CD4-positive, alpha-beta memory T cell (primary cell): ENCODE measurements at regions of chr1 and their contacts with region 1.

Region 1: GRCh38 chr1:117758444-117759316 is 152.8 kb downstream of the TENT5C start:
- DNase-seq: peak; percentile 57 to 65 (median 63)
- H3K4me3 ChIP-seq: peak overlapping the region; percentile 3 to 42
- H3K4me3 Mint-ChIP-seq: peak overlapping the region; percentile 74 to 94 (median 87)
- H3K27ac ChIP-seq: no peak overlapping the region
- H3K27ac Mint-ChIP-seq: peak overlapping the region in 5 of 7 donors; percentile 5 to 85 (median 45)
- H3K4me1 ChIP-seq: peaks cover 8% of the 10 kb centered on the region
- H3K4me1 Mint-ChIP-seq: peaks cover 4 to 10% (median 7%) of the 10 kb centered on the region in 4 donors
- H3K27me3 ChIP-seq: peaks cover 5% of the 10 kb centered on the region
- H3K27me3 Mint-ChIP-seq: peaks cover 8 to 10% of the 10 kb centered on the region in 2 donors

Region 2: DNA sequence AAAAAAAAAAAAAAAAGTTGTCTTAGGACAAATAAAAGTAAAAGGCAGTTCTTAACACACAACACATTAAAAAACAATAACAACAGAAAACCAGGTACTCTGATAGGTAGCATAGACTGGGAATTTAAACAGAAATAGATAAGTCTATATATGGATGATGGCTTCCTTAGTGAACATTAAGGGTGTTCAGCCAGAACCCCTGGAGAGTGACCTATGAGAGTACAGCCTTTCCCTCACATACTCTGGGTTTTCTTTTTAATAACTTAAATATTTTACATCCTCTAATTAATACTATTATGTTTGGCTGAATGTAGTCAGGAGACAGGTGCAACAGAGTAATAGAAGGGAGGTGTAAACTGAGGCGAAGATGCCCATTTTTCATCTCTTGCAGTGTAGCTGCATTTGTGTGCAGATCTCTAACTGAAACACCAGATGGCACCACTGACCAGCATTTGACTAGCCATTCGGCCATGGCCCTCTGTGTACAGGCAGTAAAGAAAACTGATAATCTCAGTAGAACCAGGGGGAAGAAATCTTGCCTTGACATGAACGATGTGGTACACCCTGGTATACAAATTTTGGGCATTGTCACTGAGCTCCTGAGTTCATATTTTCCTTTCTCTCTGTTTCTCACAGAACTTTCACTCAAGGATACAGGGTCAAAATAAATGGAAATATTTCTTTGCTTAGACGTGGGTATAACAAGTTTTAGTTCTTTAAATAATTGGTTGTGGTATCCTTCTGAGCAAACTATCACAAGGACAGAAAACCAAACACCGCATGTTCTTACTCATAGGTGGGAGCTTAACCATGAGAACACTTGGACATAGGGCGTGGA is 690.9 kb before region 1 on chr1:
- CTCF ChIA-PET with region 1: interaction called, 13 read pairs
- POLR2A ChIA-PET with region 1: no interaction called
- intact Hi-C with region 1: loop called (anchors 2 kb)
- DNase-seq: peak in 4 of 5 donors; percentile 22 to 45 (median 40)
- H3K4me3 ChIP-seq: no peak overlapping the region
- H3K4me3 Mint-ChIP-seq: no peak overlapping the region
- H3K27ac ChIP-seq: no peak overlapping the region
- H3K27ac Mint-ChIP-seq: no peak overlapping the region
- H3K4me1 ChIP-seq: peaks cover 7% of the 10 kb centered on the region
- H3K4me1 Mint-ChIP-seq: peaks cover 8 to 23% (median 17%) of the 10 kb centered on the region in 4 donors
- H3K27me3 ChIP-seq: no peaks in the 10 kb centered on the region
- H3K27me3 Mint-ChIP-seq: no peaks in the 10 kb centered on the region

Region 3: GRCh38 chr1:117367047-117368018 is 391.3 kb before region 1 on chr1 and contains the start of gene MAN1A2:
- CTCF ChIA-PET with region 1: interaction called, 3 read pairs
- POLR2A ChIA-PET with region 1: no interaction called
- intact Hi-C with region 1: loop called (anchors 5 kb)
- DNase-seq: peak; percentile 66 to 84 (median 69)
- H3K4me3 ChIP-seq: peak within 1 kb of the TSS; percentile 72 to 92
- H3K4me3 Mint-ChIP-seq: peak within 1 kb of the TSS; percentile 93 to 97 (median 96)
- H3K27ac ChIP-seq: peak within 1 kb of the TSS; percentile 70
- H3K27ac Mint-ChIP-seq: peak within 1 kb of the TSS; percentile 96 to 99 (median 97)
- H3K4me1 ChIP-seq: peaks cover 74% of the 10 kb centered on the region
- H3K4me1 Mint-ChIP-seq: peaks cover 53 to 84% (median 63%) of the 10 kb centered on the region in 4 donors
- H3K27me3 ChIP-seq: no peaks in the 10 kb centered on the region
- H3K27me3 Mint-ChIP-seq: no peaks in the 10 kb centered on the region
- total RNA-seq, gene MAN1A2: 57.0 to 66.5 TPM

Region 4: GRCh38 chr1:117527566-117528102 is 231.0 kb before region 1 on chr1:
- CTCF ChIA-PET with region 1: interaction called, 350 read pairs
- POLR2A ChIA-PET with region 1: no interaction called
- intact Hi-C with region 1: no loop called
- DNase-seq: no peak
- H3K4me3 ChIP-seq: no peak overlapping the region
- H3K4me3 Mint-ChIP-seq: no peak overlapping the region
- H3K27ac ChIP-seq: no peak overlapping the region
- H3K27ac Mint-ChIP-seq: no peak overlapping the region
- H3K4me1 ChIP-seq: no peaks in the 10 kb centered on the region
- H3K4me1 Mint-ChIP-seq: peaks cover 0 to 3% (median 0%) of the 10 kb centered on the region in 4 donors
- H3K27me3 ChIP-seq: no peaks in the 10 kb centered on the region
- H3K27me3 Mint-ChIP-seq: no peaks in the 10 kb centered on the region

Region 5: GRCh38 chr1:117654493-117655219 is 104.0 kb before region 1 on chr1:
- CTCF ChIA-PET with region 1: interaction called, 14 read pairs
- POLR2A ChIA-PET with region 1: no interaction called
- intact Hi-C with region 1: no loop called
- DNase-seq: peak in 4 of 5 donors; percentile 31 to 44 (median 37)
- H3K4me3 ChIP-seq: peak overlapping the region; percentile 8 to 20
- H3K4me3 Mint-ChIP-seq: peak overlapping the region; percentile 52 to 88 (median 76)
- H3K27ac ChIP-seq: peak overlapping the region; percentile 9
- H3K27ac Mint-ChIP-seq: peak overlapping the region; percentile 81 to 99 (median 94)
- H3K4me1 ChIP-seq: peaks cover 95% of the 10 kb centered on the region
- H3K4me1 Mint-ChIP-seq: peaks cover 75 to 92% (median 86%) of the 10 kb centered on the region in 4 donors
- H3K27me3 ChIP-seq: no peaks in the 10 kb centered on the region
- H3K27me3 Mint-ChIP-seq: no peaks in the 10 kb centered on the region

Region 6: GRCh38 chr1:117735045-117735992 is 23.4 kb before region 1 on chr1:
- CTCF ChIA-PET with region 1: interaction called, 64 read pairs
- POLR2A ChIA-PET with region 1: no interaction called
- intact Hi-C with region 1: no loop called
- DNase-seq: peak; percentile 39 to 56 (median 52)
- H3K4me3 ChIP-seq: peak overlapping the region; percentile 26 to 44
- H3K4me3 Mint-ChIP-seq: peak overlapping the region; percentile 63 to 95 (median 88)
- H3K27ac ChIP-seq: peak overlapping the region; percentile 45
- H3K27ac Mint-ChIP-seq: peak overlapping the region; percentile 66 to 96 (median 94)
- H3K4me1 ChIP-seq: peaks cover 14% of the 10 kb centered on the region
- H3K4me1 Mint-ChIP-seq: peaks cover 10 to 24% (median 20%) of the 10 kb centered on the region in 4 donors
- H3K27me3 ChIP-seq: no peaks in the 10 kb centered on the region
- H3K27me3 Mint-ChIP-seq: no peaks in the 10 kb centered on the region

Region 7: DNA sequence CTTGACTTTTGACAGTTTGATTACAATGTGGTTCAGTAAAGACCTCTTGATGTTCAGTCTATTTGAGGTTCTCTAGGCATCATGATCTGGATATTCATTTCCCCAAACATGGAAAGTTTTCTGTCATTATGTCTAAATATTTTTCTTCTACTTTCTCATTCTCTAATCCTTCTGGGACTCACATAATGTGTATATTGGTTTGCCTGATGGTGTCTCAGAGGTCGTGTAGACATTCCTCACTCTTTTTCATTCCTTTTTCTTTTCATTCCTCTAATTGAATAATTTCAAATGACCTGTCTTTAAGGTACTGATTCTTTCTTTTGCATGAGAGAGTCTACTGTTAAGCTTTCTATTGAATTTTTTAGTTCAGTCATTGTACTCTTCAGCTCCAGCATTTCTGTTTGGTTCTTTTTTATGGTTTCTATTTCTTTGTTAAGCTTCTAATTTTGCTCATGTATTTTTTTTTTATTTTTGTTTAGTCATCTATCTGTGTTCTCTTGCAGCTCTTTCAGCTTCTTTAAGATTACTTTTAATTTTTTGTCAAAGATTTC is 12.4 kb after region 1 on chr1:
- CTCF ChIA-PET with region 1: interaction called, 27 read pairs
- POLR2A ChIA-PET with region 1: no interaction called
- intact Hi-C with region 1: no loop called
- DNase-seq: no peak
- H3K4me3 ChIP-seq: no peak overlapping the region
- H3K4me3 Mint-ChIP-seq: no peak overlapping the region
- H3K27ac ChIP-seq: no peak overlapping the region
- H3K27ac Mint-ChIP-seq: no peak overlapping the region
- H3K4me1 ChIP-seq: no peaks in the 10 kb centered on the region
- H3K4me1 Mint-ChIP-seq: no peaks in the 10 kb centered on the region
- H3K27me3 ChIP-seq: no peaks in the 10 kb centered on the region
- H3K27me3 Mint-ChIP-seq: peaks cover 21 to 29% of the 10 kb centered on the region in 2 donors

Region 8: DNA sequence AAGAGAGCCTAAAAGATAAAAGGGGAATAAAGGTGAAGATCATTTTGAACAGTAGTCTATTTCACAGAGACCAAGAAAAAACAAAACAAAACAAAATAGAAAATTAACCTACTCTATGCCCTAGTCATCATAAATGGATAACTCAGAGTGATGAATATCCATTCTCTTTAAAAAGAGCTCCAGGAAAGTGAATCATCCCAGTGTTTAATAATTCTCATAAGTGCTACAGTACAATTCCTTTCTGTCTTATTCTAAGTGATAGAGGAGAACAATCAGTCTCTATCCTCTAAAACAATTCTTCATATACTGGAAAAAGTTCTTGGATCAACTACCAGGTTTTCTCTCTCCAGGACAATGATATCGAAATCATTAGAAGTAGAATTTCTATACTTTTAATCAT is 124.9 kb after region 1 on chr1:
- CTCF ChIA-PET with region 1: no interaction called
- POLR2A ChIA-PET with region 1: no interaction called
- intact Hi-C with region 1: no loop called
- DNase-seq: no peak
- H3K4me3 ChIP-seq: no peak overlapping the region
- H3K4me3 Mint-ChIP-seq: no peak overlapping the region
- H3K27ac ChIP-seq: no peak overlapping the region
- H3K27ac Mint-ChIP-seq: no peak overlapping the region
- H3K4me1 ChIP-seq: no peaks in the 10 kb centered on the region
- H3K4me1 Mint-ChIP-seq: peaks cover 0 to 2% (median 0%) of the 10 kb centered on the region in 4 donors
- H3K27me3 ChIP-seq: no peaks in the 10 kb centered on the region
- H3K27me3 Mint-ChIP-seq: no peaks in the 10 kb centered on the region